ENCODE measurements at regions of chr11 and their contacts with region 1.

Region 1: GRCh38 chr11:35087648-35088047 is 51.3 kb upstream of the CD44 start:
- DNase-seq: peak in 3 of 14 experiments; percentile 27 to 53 (median 50)
- ATAC-seq: no peak
- H3K4me3 ChIP-seq: no peak overlapping the region
- H3K4me3 Mint-ChIP-seq: no peak overlapping the region
- H3K27ac ChIP-seq: no peak overlapping the region
- H3K27ac Mint-ChIP-seq: peak overlapping the region; percentile 69
- H3K4me1 ChIP-seq: peaks cover 60% of the 10 kb centered on the region
- H3K4me1 Mint-ChIP-seq: peaks cover 91% of the 10 kb centered on the region
- H3K27me3 ChIP-seq: no peaks in the 10 kb centered on the region
- H3K27me3 Mint-ChIP-seq: no peaks in the 10 kb centered on the region
- CTCF ChIP-seq: no peak

Region 2: GRCh38 chr11:35003658-35004057 is 84.0 kb before region 1 on chr11:
- CTCF ChIA-PET with region 1: interaction called, 3 read pairs
- POLR2A ChIA-PET with region 1: interaction called, 3 read pairs
- intact Hi-C with region 1: loop called (anchors 1 to 5 kb)
- DNase-seq: no peak
- ATAC-seq: no peak
- H3K4me3 ChIP-seq: no peak overlapping the region
- H3K4me3 Mint-ChIP-seq: no peak overlapping the region
- H3K27ac ChIP-seq: no peak overlapping the region
- H3K27ac Mint-ChIP-seq: no peak overlapping the region
- H3K4me1 ChIP-seq: peaks cover 11% of the 10 kb centered on the region
- H3K4me1 Mint-ChIP-seq: peaks cover 59% of the 10 kb centered on the region
- H3K27me3 ChIP-seq: no peaks in the 10 kb centered on the region
- H3K27me3 Mint-ChIP-seq: no peaks in the 10 kb centered on the region
- CTCF ChIP-seq: no peak

Region 3: DNA sequence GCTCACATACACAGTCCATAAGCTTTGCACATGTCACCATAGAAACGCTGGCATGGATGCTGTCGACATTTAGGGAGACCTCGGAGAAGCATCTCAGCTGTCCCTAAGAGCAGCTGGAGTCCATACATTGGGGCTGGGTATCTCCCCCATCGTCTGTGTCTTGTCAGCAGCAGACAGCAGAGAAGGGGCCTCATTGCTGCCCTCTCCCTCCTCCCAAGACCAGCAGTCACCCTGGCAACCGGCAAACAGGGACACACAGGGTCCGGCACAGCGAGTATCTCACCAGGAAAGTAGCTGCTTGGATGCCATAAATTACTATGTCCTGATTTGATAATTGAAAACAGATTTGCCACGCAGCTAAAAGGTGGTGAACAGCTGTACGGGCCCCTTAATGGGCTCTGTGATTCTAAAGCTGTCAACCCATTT is 135.7 kb after region 1 on chr11:
- CTCF ChIA-PET with region 1: no interaction called
- POLR2A ChIA-PET with region 1: no interaction called
- intact Hi-C with region 1: no loop called
- DNase-seq: no peak
- ATAC-seq: no peak
- H3K4me3 ChIP-seq: no peak overlapping the region
- H3K4me3 Mint-ChIP-seq: no peak overlapping the region
- H3K27ac ChIP-seq: peak overlapping the region in 1 of 2 donors; percentile 25
- H3K27ac Mint-ChIP-seq: peak overlapping the region; percentile 68
- H3K4me1 ChIP-seq: peaks cover 8% of the 10 kb centered on the region
- H3K4me1 Mint-ChIP-seq: peaks cover 52% of the 10 kb centered on the region
- H3K27me3 ChIP-seq: no peaks in the 10 kb centered on the region
- H3K27me3 Mint-ChIP-seq: no peaks in the 10 kb centered on the region
- CTCF ChIP-seq: no peak